ENCODE measurements at regions of chr15 and their contacts with region 1.

Region 1: DNA sequence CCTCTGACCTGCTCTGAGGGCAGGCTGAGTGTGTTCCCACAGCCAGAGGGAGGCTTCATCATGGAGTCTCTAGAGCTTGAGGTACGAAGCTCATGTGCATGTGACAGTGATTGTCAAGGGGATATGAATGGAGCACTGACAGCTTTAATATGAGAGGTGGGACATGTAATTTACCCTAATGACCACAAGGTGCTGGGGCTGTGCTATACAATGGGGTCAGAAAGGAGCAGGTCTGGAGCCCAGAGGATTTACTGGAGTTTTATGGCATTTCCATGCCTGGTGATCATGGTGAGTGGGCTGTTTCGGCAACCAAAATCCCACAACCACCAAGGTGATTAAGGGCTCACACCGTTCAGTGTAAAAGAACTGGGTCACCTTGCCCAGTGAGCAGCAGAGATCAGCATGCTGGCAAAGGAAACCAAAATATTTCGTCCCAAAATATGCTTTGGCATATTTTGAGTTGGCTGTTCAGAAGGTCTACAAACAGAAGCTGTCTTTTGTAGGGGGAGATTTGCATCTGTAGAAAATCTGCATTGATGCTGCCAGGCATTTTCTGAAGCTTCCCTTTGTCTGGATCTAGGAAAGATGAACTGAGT is 40.1 kb upstream of the RASGRF1 start:
- DNase-seq: no peak
- ATAC-seq: peak; percentile 88
- H3K4me3 Mint-ChIP-seq: no peak overlapping the region
- H3K27ac Mint-ChIP-seq: no peak overlapping the region
- H3K4me1 Mint-ChIP-seq: peaks cover 8% of the 10 kb centered on the region
- H3K27me3 Mint-ChIP-seq: peaks cover 19% of the 10 kb centered on the region
- CTCF ChIP-seq: peak; percentile 61

Region 2: GRCh38 chr15:79071901-79072300 is 58.7 kb before region 1 on chr15:
- CTCF ChIA-PET with region 1: no interaction called
- POLR2A ChIA-PET with region 1: no interaction called
- DNase-seq: no peak
- ATAC-seq: no peak
- H3K4me3 Mint-ChIP-seq: no peak overlapping the region
- H3K27ac Mint-ChIP-seq: no peak overlapping the region
- H3K4me1 Mint-ChIP-seq: no peaks in the 10 kb centered on the region
- H3K27me3 Mint-ChIP-seq: peaks cover 19% of the 10 kb centered on the region
- CTCF ChIP-seq: no peak

Region 3: DNA sequence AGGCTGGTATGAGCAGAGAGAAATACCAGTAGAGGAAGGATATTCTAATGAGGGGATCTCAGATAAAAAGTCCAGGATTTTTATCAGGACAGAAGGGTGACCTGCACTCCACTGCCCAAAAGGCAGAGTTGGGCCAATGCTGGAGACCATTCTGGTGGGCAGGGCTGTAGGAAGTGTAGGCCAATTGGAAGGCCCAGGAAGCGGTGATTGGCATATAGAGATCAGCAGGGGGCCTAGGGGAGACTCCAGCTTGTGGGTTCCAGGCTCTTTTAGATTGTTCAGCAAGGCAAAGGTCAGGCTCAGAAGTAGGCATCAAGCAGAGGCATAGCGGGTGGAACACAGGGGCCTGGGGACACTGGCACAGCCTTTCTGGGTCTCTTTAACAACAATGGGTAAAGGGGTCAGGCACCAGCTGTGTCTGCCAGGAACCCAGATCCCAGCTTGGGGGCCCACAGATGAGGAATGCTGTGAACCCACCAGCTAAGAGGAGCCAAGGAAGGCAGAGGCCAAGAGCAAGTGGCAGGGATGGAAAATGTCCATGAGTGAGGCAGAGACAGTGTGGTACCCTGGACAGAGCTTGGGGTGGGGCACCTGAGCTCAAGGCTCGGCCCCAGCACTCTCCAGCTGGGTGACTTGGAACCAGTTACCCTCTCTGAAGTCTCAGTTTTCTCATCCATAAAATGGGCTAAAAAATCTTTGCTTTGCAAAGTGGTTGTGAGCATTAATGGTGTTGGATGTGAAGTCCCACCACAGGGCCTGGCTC is 13.0 kb before region 1 on chr15:
- CTCF ChIA-PET with region 1: interaction called, 15 read pairs
- POLR2A ChIA-PET with region 1: no interaction called
- DNase-seq: no peak
- ATAC-seq: peak; percentile 63
- H3K4me3 Mint-ChIP-seq: no peak overlapping the region
- H3K27ac Mint-ChIP-seq: no peak overlapping the region
- H3K4me1 Mint-ChIP-seq: no peaks in the 10 kb centered on the region
- H3K27me3 Mint-ChIP-seq: peaks cover 5% of the 10 kb centered on the region
- CTCF ChIP-seq: no peak